ENCODE measurements at regions of chr17 and their contacts with region 1.

Region 1: GRCh38 chr17:38557836-38558727 is 47.7 kb downstream of the SRCIN1 start:
- DNase-seq: peak; percentile 95
- ATAC-seq: peak; percentile 85
- H3K4me3 Mint-ChIP-seq: peak overlapping the region; percentile 73
- H3K27ac Mint-ChIP-seq: no peak overlapping the region
- H3K4me1 Mint-ChIP-seq: peaks cover 22% of the 10 kb centered on the region
- H3K27me3 Mint-ChIP-seq: peaks cover 23% of the 10 kb centered on the region

Region 2: DNA sequence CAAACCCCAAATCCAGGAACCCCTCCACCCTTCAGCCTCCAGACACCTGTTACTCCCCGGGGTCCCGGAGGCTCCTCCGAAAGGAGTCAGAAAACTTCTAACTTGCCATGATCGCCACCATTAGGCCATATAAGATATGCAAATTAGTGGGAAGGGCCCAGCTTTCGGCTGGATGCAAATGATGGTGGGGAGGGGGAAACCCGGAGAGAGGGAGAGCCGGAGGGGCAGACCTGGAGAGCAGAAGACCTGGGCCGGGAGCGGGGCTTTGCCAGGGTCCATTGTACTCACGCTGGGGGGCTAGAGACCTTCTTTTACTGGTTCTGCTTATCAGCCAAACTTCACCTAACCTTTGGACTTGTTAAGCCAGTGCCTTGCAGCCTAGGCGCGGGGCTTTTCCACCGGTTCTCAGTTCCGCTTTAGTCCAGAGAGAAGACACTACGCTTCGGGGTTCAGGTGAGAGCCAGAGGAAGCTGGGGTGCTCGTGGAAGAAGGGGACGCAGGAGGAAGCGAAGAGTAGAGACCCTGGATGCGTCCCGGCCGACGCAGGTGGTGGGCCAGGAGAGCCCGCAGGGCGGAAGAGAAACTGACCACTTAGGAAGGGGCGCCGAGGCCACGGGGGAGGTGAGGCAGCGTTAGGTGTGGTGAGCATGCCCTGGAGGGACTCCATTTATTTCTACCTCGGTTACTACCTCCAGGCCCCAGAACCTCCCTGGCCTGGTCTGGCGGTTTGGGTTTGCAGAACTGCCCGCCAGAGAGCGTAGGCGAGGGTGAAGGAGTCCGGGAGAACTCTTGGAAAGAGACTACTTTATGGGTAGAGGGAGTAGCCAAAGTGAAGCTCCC is 812.9 kb before region 1 on chr17 and contains the start of gene HNF1B:
- CTCF ChIA-PET with region 1: no interaction called
- POLR2A ChIA-PET with region 1: no interaction called
- intact Hi-C with region 1: loop called in 1 of 2 experiments (anchors 2 kb)
- DNase-seq: peak; percentile 46
- ATAC-seq: peak; percentile 49
- H3K4me3 Mint-ChIP-seq: peak within 1 kb of the TSS; percentile 10
- H3K27ac Mint-ChIP-seq: no peak within 1 kb of the TSS
- H3K4me1 Mint-ChIP-seq: peaks cover 19% of the 10 kb centered on the region
- H3K27me3 Mint-ChIP-seq: peaks cover 63% of the 10 kb centered on the region
- total RNA-seq, gene HNF1B: not detected

Region 3: DNA sequence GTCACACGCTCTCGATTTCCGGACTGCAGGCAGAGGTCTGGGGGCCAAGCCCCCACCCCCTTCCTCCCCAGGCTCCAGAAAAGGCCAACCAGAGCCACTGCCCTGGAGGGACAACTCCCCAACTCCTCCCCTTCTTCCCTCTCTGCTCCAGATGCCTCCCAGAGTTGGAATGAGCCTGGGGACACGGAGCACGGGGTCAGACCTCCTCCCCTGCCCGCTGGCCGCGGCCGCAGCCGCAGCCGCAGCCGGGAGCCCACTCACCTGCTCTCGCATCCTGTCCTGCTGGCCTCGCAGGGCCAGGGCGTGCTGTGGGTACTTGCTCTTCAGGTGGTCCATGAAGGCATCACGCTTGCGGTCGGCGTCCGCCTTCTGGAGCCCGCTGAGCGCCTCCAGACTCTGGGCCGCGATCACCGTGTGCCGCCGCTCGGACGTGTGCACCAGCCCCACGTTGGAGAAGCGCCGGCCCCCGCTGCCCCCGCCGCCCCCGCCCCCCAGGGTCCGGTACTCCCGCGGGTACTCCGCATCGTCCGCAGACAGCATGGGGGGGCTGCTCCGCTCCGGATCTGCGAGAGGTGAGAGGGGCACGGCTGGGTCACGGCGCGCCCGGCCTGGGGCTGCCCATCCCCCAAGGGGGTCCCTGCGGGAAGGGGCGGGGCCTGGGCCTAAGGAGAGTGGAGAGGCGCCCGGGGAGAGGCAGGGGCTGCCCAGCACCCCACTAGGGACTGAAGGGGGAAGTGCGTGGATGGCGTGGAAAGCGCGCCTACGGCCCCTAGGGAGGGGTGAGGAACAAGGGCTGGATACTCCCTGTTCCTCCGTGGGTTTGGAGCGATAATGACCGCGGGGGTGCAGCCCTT is 20.4 kb after region 1 on chr17:
- CTCF ChIA-PET with region 1: interaction called, 127 read pairs
- POLR2A ChIA-PET with region 1: interaction called, 6 read pairs
- intact Hi-C with region 1: no loop called
- DNase-seq: no peak
- ATAC-seq: no peak
- H3K4me3 Mint-ChIP-seq: no peak overlapping the region
- H3K27ac Mint-ChIP-seq: no peak overlapping the region
- H3K4me1 Mint-ChIP-seq: no peaks in the 10 kb centered on the region
- H3K27me3 Mint-ChIP-seq: peaks cover 67% of the 10 kb centered on the region

Region 4: GRCh38 chr17:38584350-38584925 is 26.4 kb after region 1 on chr17:
- CTCF ChIA-PET with region 1: interaction called, 127 read pairs
- POLR2A ChIA-PET with region 1: interaction called, 6 read pairs
- intact Hi-C with region 1: loop called (anchors 1 kb)
- DNase-seq: peak; percentile 81
- ATAC-seq: peak; percentile 87
- H3K4me3 Mint-ChIP-seq: no peak overlapping the region
- H3K27ac Mint-ChIP-seq: no peak overlapping the region
- H3K4me1 Mint-ChIP-seq: peaks cover 3% of the 10 kb centered on the region
- H3K27me3 Mint-ChIP-seq: peaks cover 60% of the 10 kb centered on the region

Region 5: DNA sequence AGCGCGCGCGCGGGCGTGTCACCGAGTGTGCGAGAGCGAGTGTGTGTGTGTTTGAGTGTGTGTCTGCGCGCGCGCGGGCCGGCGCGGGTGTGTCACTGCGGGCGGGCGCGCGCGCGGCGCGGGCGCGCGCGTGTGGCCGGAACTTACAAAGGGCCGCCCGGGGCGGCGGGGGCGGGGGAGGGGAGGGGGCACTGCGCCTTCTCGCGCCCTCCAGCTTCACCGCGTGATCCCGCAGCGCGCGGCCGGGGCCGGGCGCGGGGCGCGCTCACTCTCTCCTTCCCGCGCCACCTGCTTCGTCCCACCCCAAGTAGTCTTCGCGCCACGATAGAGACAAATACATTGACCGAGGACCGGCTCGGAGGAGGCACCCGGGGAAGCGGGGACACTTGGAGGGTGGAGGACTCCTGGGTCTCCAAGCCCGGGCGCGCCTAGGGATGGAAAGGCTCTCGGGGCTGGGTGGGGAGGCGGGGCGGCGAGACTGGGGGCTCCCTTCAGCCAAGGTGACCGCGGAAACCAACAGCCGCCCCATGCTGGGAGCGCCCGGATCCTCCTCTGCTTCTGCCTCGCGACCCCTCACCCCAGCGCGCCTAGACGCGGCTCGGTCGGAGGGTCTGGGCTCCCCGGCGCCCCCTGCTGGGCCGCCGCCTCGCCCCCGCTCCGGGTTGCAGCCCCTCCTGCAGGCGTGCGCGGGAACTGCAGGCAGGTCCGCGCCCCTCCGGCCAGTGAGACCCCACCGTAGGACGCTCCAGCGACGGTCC is 48.0 kb after region 1 on chr17 and contains the start of gene SRCIN1:
- CTCF ChIA-PET with region 1: interaction called, 27 read pairs
- POLR2A ChIA-PET with region 1: interaction called, 6 read pairs
- intact Hi-C with region 1: loop called (anchors 1 to 2 kb)
- DNase-seq: peak; percentile 79
- ATAC-seq: peak; percentile 42
- H3K4me3 Mint-ChIP-seq: peak within 1 kb of the TSS; percentile 66
- H3K27ac Mint-ChIP-seq: no peak within 1 kb of the TSS
- H3K4me1 Mint-ChIP-seq: peaks cover 16% of the 10 kb centered on the region
- H3K27me3 Mint-ChIP-seq: peaks cover 56% of the 10 kb centered on the region
- total RNA-seq, gene SRCIN1: 0.72 to 0.73 TPM

Region 6: GRCh38 chr17:38620551-38621277 is 62.6 kb after region 1 on chr17:
- CTCF ChIA-PET with region 1: no interaction called
- POLR2A ChIA-PET with region 1: no interaction called
- intact Hi-C with region 1: no loop called
- DNase-seq: no peak
- ATAC-seq: no peak
- H3K4me3 Mint-ChIP-seq: no peak overlapping the region
- H3K27ac Mint-ChIP-seq: no peak overlapping the region
- H3K4me1 Mint-ChIP-seq: peaks cover 6% of the 10 kb centered on the region
- H3K27me3 Mint-ChIP-seq: peaks cover 20% of the 10 kb centered on the region

Region 7: DNA sequence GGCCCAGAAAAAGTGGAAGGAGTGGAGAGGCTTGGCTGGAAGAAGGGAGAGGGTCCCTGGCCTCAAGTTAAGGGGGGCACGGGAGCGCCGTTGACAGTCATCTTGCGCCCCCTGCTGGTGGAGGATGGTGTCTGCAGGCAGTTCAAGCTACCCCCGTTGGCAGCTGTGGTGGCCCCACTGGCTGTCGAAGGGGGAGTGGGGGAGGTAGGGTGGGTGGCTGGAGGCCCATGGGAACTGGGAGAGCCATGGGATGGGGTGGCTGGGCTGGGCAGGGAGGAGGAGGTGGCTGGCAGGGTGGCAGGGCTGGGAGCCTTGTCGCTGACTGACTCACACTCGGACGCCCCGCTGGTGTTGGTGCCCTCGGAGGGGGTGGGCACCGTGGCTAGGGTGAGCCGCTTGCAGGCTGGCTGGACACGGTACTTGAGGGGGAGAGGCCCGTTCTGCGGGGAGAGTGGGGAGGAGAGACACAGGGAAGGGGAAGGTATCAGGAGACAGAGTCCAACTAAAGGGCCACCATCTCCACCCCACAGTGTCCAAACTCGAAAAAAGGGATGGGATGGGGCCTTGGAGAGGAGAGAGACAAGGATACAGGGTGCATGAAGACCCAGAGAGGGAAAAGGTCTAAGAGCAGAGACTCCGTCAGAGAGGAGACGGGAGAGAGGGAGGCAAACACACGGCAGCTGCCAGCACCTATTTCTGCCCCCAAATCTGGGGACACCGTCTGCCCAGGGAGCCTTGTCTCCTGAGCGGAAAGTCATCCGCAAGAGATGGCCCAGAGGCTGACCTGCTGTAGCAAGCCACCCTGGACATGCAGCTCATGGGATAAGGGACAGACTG is 177.3 kb after region 1 on chr17:
- CTCF ChIA-PET with region 1: interaction called, 17 read pairs
- POLR2A ChIA-PET with region 1: no interaction called
- intact Hi-C with region 1: loop called in 1 of 2 experiments (anchors 1 kb)
- DNase-seq: peak; percentile 85
- ATAC-seq: peak; percentile 21
- H3K4me3 Mint-ChIP-seq: no peak overlapping the region
- H3K27ac Mint-ChIP-seq: no peak overlapping the region
- H3K4me1 Mint-ChIP-seq: peaks cover 45% of the 10 kb centered on the region
- H3K27me3 Mint-ChIP-seq: no peaks in the 10 kb centered on the region

Measured in activated CD4-positive, alpha-beta T cell treated with anti-CD3 and anti-CD28 coated beads for 36 hours (primary cell).